ENCODE measurements at regions of chr9 and their contacts with region 1.

Region 1: DNA sequence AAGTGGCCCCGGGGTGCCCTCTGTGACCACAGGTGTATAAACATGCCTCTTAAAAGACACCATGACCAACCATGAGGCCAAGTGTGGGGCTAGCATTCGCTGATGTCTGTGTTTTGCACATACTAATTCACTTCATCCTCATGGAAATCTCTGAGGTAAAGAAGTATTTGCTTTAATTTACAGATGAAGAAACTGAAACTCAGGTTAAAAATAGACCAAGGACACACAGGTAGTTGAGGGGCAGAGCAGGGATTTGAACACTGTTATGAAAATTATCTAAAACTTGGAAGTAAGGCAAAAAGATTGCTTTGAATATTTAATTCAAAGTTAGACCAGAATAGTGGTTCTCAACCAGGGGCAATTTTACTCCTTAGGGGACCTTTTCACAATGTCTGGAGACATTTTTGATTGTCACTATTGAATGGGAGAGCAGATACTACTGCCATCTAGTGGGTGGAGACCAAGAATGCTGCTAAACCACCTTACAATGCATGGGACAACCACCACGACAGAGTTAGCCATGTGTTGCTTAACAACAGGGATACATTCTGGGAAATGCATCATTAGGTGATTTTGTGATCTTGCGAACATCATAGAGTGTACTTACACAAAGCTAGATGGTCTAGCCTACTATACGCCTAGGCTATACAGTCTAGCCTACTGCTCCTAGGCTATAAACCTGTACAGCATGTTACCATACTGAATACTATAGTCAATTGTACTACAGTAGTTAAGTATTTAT is 8.0 kb upstream of the FXN start:
- DNase-seq: peak; percentile 33
- ATAC-seq: peak; percentile 88
- H3K4me3 ChIP-seq: no peak overlapping the region
- H3K27ac ChIP-seq: no peak overlapping the region
- H3K4me1 ChIP-seq: no peaks in the 10 kb centered on the region
- H3K27me3 ChIP-seq: no peaks in the 10 kb centered on the region; the same call in 1 of the 2 replicates
- CTCF ChIP-seq: peak; percentile 79

Region 2: GRCh38 chr9:68609901-68610415 is 417.6 kb before region 1 on chr9:
- CTCF ChIA-PET with region 1: no interaction called
- POLR2A ChIA-PET with region 1: no interaction called
- in situ Hi-C with region 1: no loop called
- intact Hi-C with region 1: no loop called
- DNase-seq: no peak
- ATAC-seq: no peak
- H3K4me3 ChIP-seq: no peak overlapping the region
- H3K27ac ChIP-seq: no peak overlapping the region
- H3K4me1 ChIP-seq: no peaks in the 10 kb centered on the region
- H3K27me3 ChIP-seq: no peaks in the 10 kb centered on the region
- CTCF ChIP-seq: no peak

Region 3: DNA sequence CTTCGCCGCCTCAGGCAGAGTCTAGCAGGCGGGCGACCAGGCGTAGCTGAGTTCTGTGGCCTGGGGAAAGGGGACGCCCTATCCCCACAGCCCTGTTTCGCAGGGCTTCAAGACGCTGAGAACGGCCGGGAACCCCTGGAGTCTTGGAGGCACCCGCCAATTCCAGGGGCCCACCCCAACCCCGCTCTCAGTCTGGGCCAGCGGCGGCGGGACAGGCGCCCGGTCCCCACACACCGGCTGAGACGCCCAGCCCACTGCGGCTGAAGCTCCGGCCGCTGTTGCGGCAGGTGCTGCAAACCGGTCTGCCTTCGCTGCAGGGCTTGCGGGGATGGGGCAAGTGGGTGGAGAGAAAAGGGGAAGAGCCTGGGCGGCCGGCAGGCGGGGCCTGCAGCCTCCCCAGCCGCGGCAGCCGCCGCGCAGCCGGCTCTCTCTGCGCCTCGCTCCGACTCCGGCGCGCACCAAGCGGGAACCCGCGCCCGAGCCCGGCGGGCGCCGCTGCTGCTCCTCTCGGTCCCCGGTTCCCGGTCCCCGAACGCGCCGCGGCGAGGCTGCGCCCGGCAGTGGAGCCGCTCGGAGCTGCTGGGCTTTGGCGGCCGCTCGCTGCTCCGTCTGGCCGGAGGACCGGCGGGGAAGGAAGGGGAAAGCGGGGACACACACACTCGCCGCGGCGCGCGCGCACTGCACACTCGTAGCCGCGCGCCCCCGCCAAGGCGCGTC is 322.6 kb before region 1 on chr9 and contains the start of gene PIP5K1B:
- CTCF ChIA-PET with region 1: no interaction called
- POLR2A ChIA-PET with region 1: no interaction called
- in situ Hi-C with region 1: no loop called
- intact Hi-C with region 1: loop called (anchors 10 kb)
- DNase-seq: no peak
- ATAC-seq: peak; percentile 96
- H3K4me3 ChIP-seq: peak within 1 kb of the TSS; percentile 34 to 40
- H3K27ac ChIP-seq: no peak within 1 kb of the TSS
- H3K4me1 ChIP-seq: no peaks in the 10 kb centered on the region; the same call in 1 of the 2 replicates
- H3K27me3 ChIP-seq: peaks cover 15% of the 10 kb centered on the region
- CTCF ChIP-seq: no peak
- total RNA-seq, gene PIP5K1B: not detected

Region 4: GRCh38 chr9:68717552-68718443 is 309.7 kb before region 1 on chr9:
- CTCF ChIA-PET with region 1: no interaction called
- POLR2A ChIA-PET with region 1: no interaction called
- in situ Hi-C with region 1: no loop called
- intact Hi-C with region 1: no loop called
- DNase-seq: no peak
- ATAC-seq: no peak
- H3K4me3 ChIP-seq: no peak overlapping the region
- H3K27ac ChIP-seq: no peak overlapping the region
- H3K4me1 ChIP-seq: no peaks in the 10 kb centered on the region
- H3K27me3 ChIP-seq: no peaks in the 10 kb centered on the region
- CTCF ChIP-seq: no peak

Region 5: DNA sequence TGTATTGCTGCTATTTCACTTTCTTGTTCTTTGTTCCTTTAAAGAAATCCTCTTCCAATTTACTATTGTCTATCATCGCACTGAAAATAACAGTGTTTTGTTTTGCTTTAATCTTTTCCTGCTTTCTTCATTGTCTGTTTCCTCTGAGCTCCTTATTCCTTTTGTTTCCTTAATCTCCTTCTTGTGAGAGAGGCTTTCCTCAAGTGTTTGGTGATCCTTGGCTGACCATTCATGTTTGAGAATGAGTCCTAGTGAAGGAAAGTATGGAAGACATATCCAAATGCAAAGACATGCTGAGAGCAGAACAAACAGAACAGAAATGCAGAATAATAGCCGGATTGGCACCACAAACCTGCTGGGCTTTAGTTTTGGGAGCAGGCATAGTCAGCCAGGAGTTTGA is 255.5 kb after region 1 on chr9:
- CTCF ChIA-PET with region 1: no interaction called
- POLR2A ChIA-PET with region 1: no interaction called
- in situ Hi-C with region 1: no loop called
- intact Hi-C with region 1: no loop called
- DNase-seq: no peak
- ATAC-seq: no peak
- H3K4me3 ChIP-seq: no peak overlapping the region
- H3K27ac ChIP-seq: no peak overlapping the region
- H3K4me1 ChIP-seq: no peaks in the 10 kb centered on the region
- H3K27me3 ChIP-seq: no peaks in the 10 kb centered on the region
- CTCF ChIP-seq: no peak